Psoas muscle (tissue), 8 donors: ENCODE measurements at regions of chr9 and their contacts with region 1.

Region 1: GRCh38 chr9:107489687-107490605 is at the start of gene KLF4:
- DNase-seq: peak; percentile 90 to 94
- ATAC-seq: peak; percentile 87 to 90 (median 88)
- H3K4me3 ChIP-seq: peak within 1 kb of the TSS; percentile 94
- H3K27ac ChIP-seq: peak within 1 kb of the TSS; percentile 94
- H3K4me1 ChIP-seq: peaks cover 13% of the 10 kb centered on the region
- H3K27me3 ChIP-seq: no peaks in the 10 kb centered on the region
- CTCF ChIP-seq: no peak
- total RNA-seq, gene KLF4: 11.6 to 17.2 (median 14.7) TPM

Region 2: GRCh38 chr9:107637421-107638420 is 147.8 kb after region 1 on chr9:
- intact Hi-C with region 1: loop called (anchors 2 to 5 kb)
- DNase-seq: peak; percentile 90 to 93
- ATAC-seq: peak; percentile 89 to 93 (median 92)
- H3K4me3 ChIP-seq: peak overlapping the region; percentile 65
- H3K27ac ChIP-seq: peak overlapping the region; percentile 96
- H3K4me1 ChIP-seq: peaks cover 17% of the 10 kb centered on the region
- H3K27me3 ChIP-seq: no peaks in the 10 kb centered on the region
- CTCF ChIP-seq: peak; percentile 32

Region 3: GRCh38 chr9:108053555-108054061 is 563.7 kb after region 1 on chr9:
- intact Hi-C with region 1: loop called in 1 of 2 experiments (anchors 5 kb)
- DNase-seq: peak; percentile 72 to 78
- ATAC-seq: peak; percentile 59 to 83 (median 66)
- H3K4me3 ChIP-seq: peak overlapping the region; percentile 43
- H3K27ac ChIP-seq: peak overlapping the region; percentile 48
- H3K4me1 ChIP-seq: peaks cover 42% of the 10 kb centered on the region
- H3K27me3 ChIP-seq: no peaks in the 10 kb centered on the region
- CTCF ChIP-seq: no peak

Region 4: DNA sequence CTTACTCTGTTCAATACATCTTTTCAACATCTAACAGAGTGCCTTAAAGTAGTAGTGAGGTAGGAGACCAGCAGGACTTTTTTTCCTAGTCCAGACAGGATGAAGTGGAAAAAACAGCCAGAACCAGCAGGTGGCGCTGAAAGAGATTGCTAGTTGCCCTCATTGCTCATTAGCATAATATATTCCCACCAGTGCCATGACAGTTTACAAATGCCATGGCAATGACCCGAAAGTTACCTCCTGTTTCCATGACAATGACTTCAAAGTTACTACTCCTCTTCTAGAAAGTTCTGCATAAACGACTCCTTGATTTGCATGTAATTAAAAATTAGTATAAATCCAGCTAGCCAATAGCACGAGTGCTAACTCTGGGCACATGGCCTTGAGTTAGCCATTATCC is 978.5 kb after region 1 on chr9:
- intact Hi-C with region 1: loop called (anchors 5 to 10 kb)
- DNase-seq: peak; percentile 45 to 61
- ATAC-seq: peak; percentile 36 to 61 (median 55)
- H3K4me3 ChIP-seq: no peak overlapping the region
- H3K27ac ChIP-seq: peak overlapping the region; percentile 43
- H3K4me1 ChIP-seq: peaks cover 19% of the 10 kb centered on the region
- H3K27me3 ChIP-seq: no peaks in the 10 kb centered on the region
- CTCF ChIP-seq: peak; percentile 45

Region 5: DNA sequence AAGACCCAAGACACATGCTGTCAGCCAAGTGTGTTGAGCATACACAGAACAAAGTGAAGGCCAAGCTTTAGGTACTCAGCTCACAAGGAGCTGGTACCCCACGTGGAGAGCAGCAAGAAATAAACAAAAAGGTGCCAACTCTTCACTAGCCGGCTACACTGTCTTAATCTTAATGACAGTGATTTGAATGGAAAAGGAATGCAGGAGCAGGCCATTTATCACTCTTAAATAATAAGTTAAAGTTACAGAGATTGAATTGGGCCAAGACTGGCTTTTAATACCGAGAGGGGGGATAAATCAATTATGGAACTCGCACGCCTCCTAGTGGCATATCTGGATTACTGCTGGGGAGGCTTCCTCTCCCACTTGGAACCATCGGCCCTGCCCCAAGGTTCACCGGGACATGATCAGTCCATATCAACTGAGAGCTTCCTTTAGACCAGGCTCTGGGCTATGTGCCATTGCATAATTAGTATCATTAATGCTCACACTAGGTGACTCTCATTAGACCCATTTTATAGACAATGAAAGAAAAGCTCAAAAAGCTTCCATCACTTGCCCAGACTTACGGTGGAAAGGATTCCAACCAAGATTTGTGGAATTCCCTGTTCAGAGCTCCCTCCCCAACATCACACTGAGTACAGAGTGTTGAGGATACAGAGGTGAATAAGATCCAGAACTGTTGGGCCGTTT is 1271.9 kb after region 1 on chr9:
- intact Hi-C with region 1: loop called in 1 of 2 experiments (anchors 5 kb)
- DNase-seq: peak; percentile 25 to 59
- ATAC-seq: peak; percentile 63 to 92 (median 78)
- H3K4me3 ChIP-seq: no peak overlapping the region
- H3K27ac ChIP-seq: no peak overlapping the region
- H3K4me1 ChIP-seq: no peaks in the 10 kb centered on the region
- H3K27me3 ChIP-seq: no peaks in the 10 kb centered on the region
- CTCF ChIP-seq: peak; percentile 88